ENCODE measurements at regions of chr5 and their contacts with region 1.

Region 1: DNA sequence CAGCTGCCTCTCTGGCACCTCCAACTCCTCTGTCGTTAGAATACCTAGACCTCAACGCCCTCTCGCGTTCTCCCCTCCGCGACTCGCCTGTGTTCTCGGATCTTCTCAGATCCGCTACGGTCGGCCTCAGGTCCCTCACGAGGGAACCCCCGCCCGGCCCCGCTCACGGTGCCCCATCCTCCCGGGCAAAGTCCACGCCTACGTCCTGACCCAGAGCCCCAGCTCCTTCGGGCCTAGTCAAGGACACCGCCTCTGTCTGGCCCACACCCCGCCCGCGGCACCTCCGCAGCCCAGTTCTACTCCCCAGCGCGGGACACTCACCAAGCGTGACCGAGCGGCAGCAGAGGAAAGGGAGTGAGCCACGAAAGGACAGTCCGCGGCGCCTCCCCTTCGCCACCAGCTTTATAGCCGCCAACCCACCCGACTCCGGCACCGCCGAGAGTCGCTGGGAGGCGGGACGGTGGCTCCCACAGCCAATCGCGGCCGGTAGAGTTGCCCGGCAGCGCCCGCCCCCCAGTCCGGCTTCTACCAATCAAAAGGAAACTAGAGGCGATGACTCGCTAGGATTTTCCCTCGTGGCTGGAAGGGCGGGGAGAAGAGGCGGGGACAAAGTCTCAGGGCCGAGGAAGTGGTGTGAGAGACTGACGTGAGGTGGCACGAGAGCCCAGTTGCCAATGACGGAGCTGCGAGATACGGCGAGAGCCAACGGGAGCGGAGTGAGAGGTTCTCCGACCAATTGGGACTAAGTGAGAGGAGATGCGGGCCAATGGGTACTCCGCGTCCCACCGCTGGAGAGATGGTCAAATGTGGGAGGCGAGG is at the start of gene HMGCS1:
- DNase-seq: peak; percentile 99
- H3K4me3 Mint-ChIP-seq: peak within 1 kb of the TSS; percentile 96
- H3K27ac Mint-ChIP-seq: peak within 1 kb of the TSS; percentile 94
- H3K4me1 Mint-ChIP-seq: peaks cover 72% of the 10 kb centered on the region
- H3K27me3 Mint-ChIP-seq: peaks cover 2% of the 10 kb centered on the region
- total RNA-seq, gene HMGCS1: 158 to 162 TPM

Region 2: GRCh38 chr5:42950440-42951292 is 362.6 kb before region 1 on chr5:
- CTCF ChIA-PET with region 1: interaction called, 3 read pairs
- POLR2A ChIA-PET with region 1: no interaction called
- intact Hi-C with region 1: loop called (anchors 1 kb)
- DNase-seq: peak; percentile 86
- H3K4me3 Mint-ChIP-seq: peak overlapping the region; percentile 94
- H3K27ac Mint-ChIP-seq: peak overlapping the region; percentile 97
- H3K4me1 Mint-ChIP-seq: peaks cover 30% of the 10 kb centered on the region
- H3K27me3 Mint-ChIP-seq: no peaks in the 10 kb centered on the region

Region 3: GRCh38 chr5:43066799-43067741 is 246.2 kb before region 1 on chr5:
- CTCF ChIA-PET with region 1: interaction called, 3 read pairs
- POLR2A ChIA-PET with region 1: interaction called, 12 read pairs
- intact Hi-C with region 1: loop called (anchors 1 kb)
- DNase-seq: peak; percentile 92
- H3K4me3 Mint-ChIP-seq: peak overlapping the region; percentile 96
- H3K27ac Mint-ChIP-seq: peak overlapping the region; percentile 99
- H3K4me1 Mint-ChIP-seq: peaks cover 37% of the 10 kb centered on the region
- H3K27me3 Mint-ChIP-seq: no peaks in the 10 kb centered on the region

Region 4: DNA sequence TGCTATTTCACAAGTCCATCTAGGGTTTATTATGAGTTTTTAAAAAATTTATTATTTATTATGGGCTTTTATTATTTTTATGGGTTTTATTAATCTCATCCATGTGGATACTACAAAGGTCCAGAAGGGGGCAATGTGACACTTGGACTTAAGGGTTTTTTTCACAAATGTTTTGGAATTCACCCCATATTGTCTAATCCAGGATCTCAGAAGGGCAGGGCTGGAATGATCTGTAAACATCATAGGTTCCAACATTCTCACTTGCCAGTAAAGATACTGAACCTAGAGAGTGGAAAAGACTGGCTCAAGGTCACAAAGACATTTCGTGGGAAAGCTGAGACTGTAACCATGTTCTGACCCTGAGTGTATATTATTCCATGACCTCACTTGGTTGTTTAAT is 85.6 kb before region 1 on chr5:
- CTCF ChIA-PET with region 1: no interaction called
- POLR2A ChIA-PET with region 1: no interaction called
- intact Hi-C with region 1: loop called (anchors 5 kb)
- DNase-seq: no peak
- H3K4me3 Mint-ChIP-seq: no peak overlapping the region
- H3K27ac Mint-ChIP-seq: no peak overlapping the region
- H3K4me1 Mint-ChIP-seq: no peaks in the 10 kb centered on the region
- H3K27me3 Mint-ChIP-seq: no peaks in the 10 kb centered on the region

Region 5: GRCh38 chr5:43290726-43291125 is 22.5 kb before region 1 on chr5:
- CTCF ChIA-PET with region 1: no interaction called
- POLR2A ChIA-PET with region 1: no interaction called
- intact Hi-C with region 1: no loop called
- DNase-seq: no peak
- H3K4me3 Mint-ChIP-seq: no peak overlapping the region
- H3K27ac Mint-ChIP-seq: no peak overlapping the region
- H3K4me1 Mint-ChIP-seq: no peaks in the 10 kb centered on the region
- H3K27me3 Mint-ChIP-seq: no peaks in the 10 kb centered on the region

Region 6: GRCh38 chr5:43389679-43390329 is 76.6 kb after region 1 on chr5:
- CTCF ChIA-PET with region 1: interaction called, 29 read pairs
- POLR2A ChIA-PET with region 1: interaction called, 7 read pairs
- intact Hi-C with region 1: loop called (anchors 1 kb)
- DNase-seq: peak; percentile 58
- H3K4me3 Mint-ChIP-seq: no peak overlapping the region
- H3K27ac Mint-ChIP-seq: no peak overlapping the region
- H3K4me1 Mint-ChIP-seq: peaks cover 31% of the 10 kb centered on the region
- H3K27me3 Mint-ChIP-seq: no peaks in the 10 kb centered on the region

Region 7: DNA sequence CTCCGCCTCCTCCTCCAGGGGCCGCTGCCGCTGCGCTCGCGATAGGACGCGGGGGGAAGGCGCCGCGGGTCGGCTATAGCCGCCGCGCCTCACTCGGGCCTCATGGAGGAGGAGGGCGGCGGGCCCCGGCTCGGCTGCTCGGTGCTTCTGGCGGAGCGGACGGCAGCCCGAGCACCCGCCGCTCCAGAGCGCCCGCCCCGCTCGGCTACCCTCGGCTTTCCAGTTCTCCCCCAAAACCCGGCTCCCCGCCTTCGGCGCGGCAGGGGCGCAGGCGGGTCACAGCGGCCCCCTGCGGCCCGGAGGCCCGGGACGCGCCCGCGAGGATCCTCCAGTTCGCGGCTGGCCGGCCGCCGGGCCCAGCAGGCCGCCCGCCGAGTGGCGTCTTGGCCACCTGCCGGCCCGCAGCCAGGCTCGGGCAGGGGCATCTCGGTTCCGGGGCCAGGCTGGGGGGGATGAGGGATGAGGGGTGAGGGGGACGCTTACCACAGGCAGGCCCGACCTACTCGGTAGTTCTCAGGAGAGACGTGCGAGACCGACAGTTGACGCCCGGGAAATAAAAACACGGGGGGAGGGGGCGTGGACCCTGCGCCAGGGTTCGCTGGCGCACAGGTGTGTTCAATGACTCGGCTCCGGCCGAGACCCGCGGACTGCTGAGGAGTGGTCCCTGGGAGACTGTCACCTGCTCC is 243.8 kb after region 1 on chr5 and contains the start of gene PAIP1:
- CTCF ChIA-PET with region 1: no interaction called
- POLR2A ChIA-PET with region 1: no interaction called
- intact Hi-C with region 1: loop called (anchors 2 kb)
- DNase-seq: peak; percentile 89
- H3K4me3 Mint-ChIP-seq: peak within 1 kb of the TSS; percentile 90
- H3K27ac Mint-ChIP-seq: peak within 1 kb of the TSS; percentile 91
- H3K4me1 Mint-ChIP-seq: peaks cover 15% of the 10 kb centered on the region
- H3K27me3 Mint-ChIP-seq: no peaks in the 10 kb centered on the region
- total RNA-seq, gene PAIP1: 49.2 to 50.5 TPM

Measured in activated CD4-positive, alpha-beta memory T cell treated with anti-CD3 and anti-CD28 coated beads for 36 hours (primary cell).